A673 (cell line): ENCODE measurements at regions of chr10 and their contacts with region 1.

Region 1: GRCh38 chr10:102752934-102753664 is 9.4 kb downstream of the WBP1L start:
- DNase-seq: peak; percentile 67
- H3K4me3 ChIP-seq: no peak overlapping the region
- H3K27ac ChIP-seq: no peak overlapping the region
- H3K4me1 ChIP-seq: peaks cover 7% of the 10 kb centered on the region
- H3K27me3 ChIP-seq: no peaks in the 10 kb centered on the region
- CTCF ChIP-seq: peak; percentile 69

Region 2: GRCh38 chr10:102802920-102803534 is 49.9 kb after region 1 on chr10:
- CTCF ChIA-PET with region 1: no interaction called
- POLR2A ChIA-PET with region 1: no interaction called
- intact Hi-C with region 1: loop called (anchors 5 kb)
- DNase-seq: peak; percentile 62
- H3K4me3 ChIP-seq: no peak overlapping the region
- H3K27ac ChIP-seq: peak overlapping the region; percentile 60
- H3K4me1 ChIP-seq: peaks cover 37% of the 10 kb centered on the region
- H3K27me3 ChIP-seq: no peaks in the 10 kb centered on the region
- CTCF ChIP-seq: no peak

Region 3: DNA sequence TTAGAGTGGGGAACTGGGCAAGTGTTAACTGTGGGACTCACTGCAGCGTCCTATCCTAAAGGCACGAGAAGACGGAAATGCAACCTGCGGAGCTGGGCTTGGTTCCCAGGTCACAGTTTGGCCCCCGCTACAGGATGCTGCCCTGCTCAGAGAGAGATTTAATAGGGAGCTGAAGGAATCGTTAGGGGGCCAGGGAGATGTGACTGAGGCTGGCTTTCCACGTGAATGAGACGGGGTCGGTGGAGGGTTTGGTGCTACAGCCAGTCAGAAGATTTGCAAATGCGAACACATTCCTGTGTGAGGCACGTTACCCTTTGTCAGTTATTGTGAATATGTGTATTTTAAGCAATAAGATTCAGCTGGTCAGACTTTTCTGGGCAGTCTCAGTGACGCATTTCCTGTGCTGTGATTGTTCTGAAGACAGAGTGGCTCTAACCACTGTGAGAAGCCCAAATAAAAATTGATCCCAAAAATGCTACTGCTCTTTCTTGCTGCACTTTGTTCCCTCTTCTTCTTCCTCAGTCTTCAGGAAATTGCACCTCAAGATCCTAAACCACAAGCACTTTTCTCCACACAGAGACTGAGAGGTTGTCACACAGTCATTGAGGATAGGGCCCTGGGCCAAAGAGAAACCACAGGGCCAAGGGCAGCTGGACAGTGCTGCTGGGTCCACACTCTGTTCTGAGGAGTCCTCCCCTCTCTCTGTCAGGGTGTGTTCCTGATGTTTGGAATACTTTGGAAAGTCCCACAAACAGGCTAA is 62.9 kb after region 1 on chr10:
- CTCF ChIA-PET with region 1: no interaction called
- POLR2A ChIA-PET with region 1: no interaction called
- intact Hi-C with region 1: loop called (anchors 5 kb)
- DNase-seq: no peak
- H3K4me3 ChIP-seq: no peak overlapping the region
- H3K27ac ChIP-seq: peak overlapping the region; percentile 44
- H3K4me1 ChIP-seq: no peaks in the 10 kb centered on the region
- H3K27me3 ChIP-seq: no peaks in the 10 kb centered on the region
- CTCF ChIP-seq: no peak